ENCODE measurements at regions of chr14 and their contacts with region 1.

Region 1: GRCh38 chr14:73058224-73058921 is at the start of gene RBM25:
- DNase-seq: peak; percentile 96
- H3K4me3 ChIP-seq: peak within 1 kb of the TSS; percentile 99
- H3K27ac ChIP-seq: peak within 1 kb of the TSS; percentile 91
- H3K4me1 ChIP-seq: peaks cover 21% of the 10 kb centered on the region
- H3K27me3 ChIP-seq: no peaks in the 10 kb centered on the region
- CTCF ChIP-seq: no peak
- total RNA-seq, gene RBM25: 59.2 and 68.9 TPM in 2 replicates

Region 2: GRCh38 chr14:72341237-72341636 is 717.1 kb before region 1 on chr14:
- CTCF ChIA-PET with region 1: no interaction called
- POLR2A ChIA-PET with region 1: no interaction called
- intact Hi-C with region 1: no loop called
- DNase-seq: no peak
- H3K4me3 ChIP-seq: no peak overlapping the region
- H3K27ac ChIP-seq: no peak overlapping the region
- H3K4me1 ChIP-seq: no peaks in the 10 kb centered on the region
- H3K27me3 ChIP-seq: peaks cover 6% of the 10 kb centered on the region; the same call in 1 of the 2 replicates
- CTCF ChIP-seq: no peak

Region 3: DNA sequence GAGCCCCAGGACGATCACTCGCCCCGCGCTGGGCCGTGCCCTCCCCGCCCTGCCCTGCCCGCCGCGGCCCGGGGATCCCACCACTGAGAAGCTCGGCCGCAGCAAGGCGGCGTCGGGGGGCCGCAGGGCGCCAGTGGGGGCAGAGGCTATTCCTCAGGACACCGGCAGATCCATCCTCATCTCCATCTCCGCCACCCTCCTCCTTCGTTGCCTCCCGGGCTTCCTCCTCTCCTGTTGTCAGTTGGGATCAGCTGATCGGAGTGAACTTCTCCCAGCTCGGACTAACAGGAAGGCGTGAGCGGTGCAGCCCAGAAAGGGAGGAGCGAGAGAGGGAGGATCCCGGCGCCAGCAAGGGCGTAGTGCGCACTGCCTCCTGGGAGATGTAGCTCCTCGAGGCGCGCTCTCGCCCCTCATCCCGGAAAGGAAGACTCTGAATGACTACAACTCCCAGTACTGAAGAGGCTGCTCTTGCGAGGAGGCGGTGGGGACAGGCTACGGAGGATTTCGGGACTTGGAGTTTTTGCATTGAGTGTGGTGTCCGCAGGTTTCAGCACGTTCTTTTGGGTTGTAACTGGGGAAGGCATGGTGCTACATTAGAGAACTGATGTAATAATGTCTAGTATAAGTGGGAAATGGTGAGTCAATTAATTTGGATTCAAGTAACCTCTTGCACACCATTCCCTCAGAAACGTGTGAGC is 31.4 kb before region 1 on chr14 and contains the start of gene ZFYVE1:
- CTCF ChIA-PET with region 1: no interaction called
- POLR2A ChIA-PET with region 1: interaction called, 10 read pairs
- intact Hi-C with region 1: loop called (anchors 2 kb)
- DNase-seq: peak; percentile 95
- H3K4me3 ChIP-seq: peak within 1 kb of the TSS; percentile 77
- H3K27ac ChIP-seq: no peak within 1 kb of the TSS
- H3K4me1 ChIP-seq: peaks cover 9% of the 10 kb centered on the region
- H3K27me3 ChIP-seq: no peaks in the 10 kb centered on the region
- CTCF ChIP-seq: no peak
- total RNA-seq, gene ZFYVE1: 8.8 and 9.0 TPM in 2 replicates